Endothelial cell of umbilical vein (primary cell): ENCODE measurements at regions of chr1 and their contacts with region 1.

Region 1: DNA sequence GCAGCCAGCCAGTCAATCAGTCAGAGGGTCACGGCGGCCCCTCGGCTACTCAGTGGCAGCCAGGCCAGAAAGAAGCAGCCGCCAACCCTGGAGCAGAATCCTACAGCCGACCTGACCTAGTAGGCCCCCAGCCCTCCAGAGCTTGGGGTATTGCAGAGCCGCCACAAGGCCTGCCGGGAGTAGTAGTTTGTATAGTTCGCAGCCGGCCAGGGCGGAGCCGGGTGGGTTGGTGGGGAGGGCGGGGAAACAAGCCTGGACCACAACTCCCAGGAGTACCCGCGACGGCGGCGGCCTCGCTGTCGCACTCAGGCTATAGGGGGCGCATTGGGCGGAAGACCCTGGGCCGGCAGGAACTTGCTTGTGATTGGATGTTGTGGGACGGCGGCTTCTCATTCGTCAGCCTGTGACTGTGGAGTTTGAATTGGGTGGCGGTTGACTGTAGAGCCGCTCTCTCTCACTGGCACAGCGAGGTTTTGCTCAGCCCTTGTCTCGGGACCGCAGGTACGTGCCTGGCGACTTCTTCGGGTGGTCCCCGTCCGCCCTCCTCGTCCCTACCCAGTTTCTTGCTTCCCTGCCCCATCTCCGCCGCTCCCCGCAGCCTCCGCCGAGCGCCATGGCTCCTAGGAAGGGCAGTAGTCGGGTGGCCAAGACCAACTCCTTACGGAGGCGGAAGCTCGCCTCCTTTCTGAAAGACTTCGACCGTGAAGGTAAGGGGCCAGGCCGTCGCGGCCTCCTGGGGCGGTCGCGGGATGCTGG is at the start of gene CDCA8:
- DNase-seq: peak; percentile 99
- H3K4me3 ChIP-seq: peak within 1 kb of the TSS; percentile 88 to 96 (median 88)
- H3K27ac ChIP-seq: peak within 1 kb of the TSS; percentile 28
- H3K4me1 ChIP-seq: peaks cover 29% of the 10 kb centered on the region
- H3K27me3 ChIP-seq: no peaks in the 10 kb centered on the region
- CTCF ChIP-seq: peak; percentile 73 to 94
- POLR2A ChIP-seq: peak; percentile 58
- total RNA-seq, gene CDCA8: 43.7 and 45.7 TPM in 2 replicates

Region 2: GRCh38 chr1:37479255-37480124 is 212.8 kb before region 1 on chr1:
- CTCF ChIA-PET with region 1: no interaction called
- POLR2A ChIA-PET with region 1: no interaction called
- dilution Hi-C with region 1: no loop called
- intact Hi-C with region 1: loop called (anchors 2 kb)
- DNase-seq: peak; percentile 76
- H3K4me3 ChIP-seq: peak overlapping the region in 2 of 3 experiments; percentile 3 to 54
- H3K27ac ChIP-seq: peak overlapping the region; percentile 82
- H3K4me1 ChIP-seq: peaks cover 54% of the 10 kb centered on the region
- H3K27me3 ChIP-seq: no peaks in the 10 kb centered on the region
- CTCF ChIP-seq: no peak
- POLR2A ChIP-seq: no peak

Region 3: DNA sequence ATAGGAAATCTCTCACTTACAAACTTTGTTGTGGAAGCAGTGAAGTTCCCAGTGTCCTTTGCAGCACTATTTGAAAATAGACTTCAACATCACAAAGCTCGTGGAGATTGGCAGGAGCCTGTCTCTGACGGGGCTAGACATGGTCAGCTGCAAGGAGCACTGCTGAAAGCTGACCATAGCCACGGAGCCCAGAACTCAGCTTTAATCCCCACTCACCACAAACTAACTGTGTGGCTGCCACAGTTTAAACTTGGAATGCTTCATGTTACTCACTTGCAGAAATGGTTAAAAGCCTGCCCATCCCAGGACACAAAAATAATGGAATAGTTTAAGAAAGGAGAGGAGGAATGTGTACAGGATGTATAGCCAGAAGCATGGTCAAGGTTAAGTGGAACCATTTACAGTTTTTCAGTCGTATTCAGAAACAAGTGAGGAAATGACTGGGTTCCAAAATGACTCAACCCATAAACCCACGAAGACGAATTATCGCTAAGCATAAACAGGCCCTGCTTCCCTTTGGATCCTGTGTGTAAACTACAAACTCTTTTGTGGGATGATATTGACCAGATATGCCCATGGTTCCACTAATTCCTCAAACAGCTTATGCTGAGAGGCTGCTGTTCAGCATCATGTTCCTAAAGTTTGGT is 117.3 kb before region 1 on chr1:
- CTCF ChIA-PET with region 1: interaction called, 4 read pairs
- POLR2A ChIA-PET with region 1: no interaction called
- dilution Hi-C with region 1: no loop called
- intact Hi-C with region 1: loop called (anchors 1 kb)
- DNase-seq: peak; percentile 81
- H3K4me3 ChIP-seq: no peak overlapping the region
- H3K27ac ChIP-seq: peak overlapping the region; percentile 72
- H3K4me1 ChIP-seq: peaks cover 36% of the 10 kb centered on the region
- H3K27me3 ChIP-seq: no peaks in the 10 kb centered on the region
- CTCF ChIP-seq: no peak
- POLR2A ChIP-seq: no peak

Region 4: DNA sequence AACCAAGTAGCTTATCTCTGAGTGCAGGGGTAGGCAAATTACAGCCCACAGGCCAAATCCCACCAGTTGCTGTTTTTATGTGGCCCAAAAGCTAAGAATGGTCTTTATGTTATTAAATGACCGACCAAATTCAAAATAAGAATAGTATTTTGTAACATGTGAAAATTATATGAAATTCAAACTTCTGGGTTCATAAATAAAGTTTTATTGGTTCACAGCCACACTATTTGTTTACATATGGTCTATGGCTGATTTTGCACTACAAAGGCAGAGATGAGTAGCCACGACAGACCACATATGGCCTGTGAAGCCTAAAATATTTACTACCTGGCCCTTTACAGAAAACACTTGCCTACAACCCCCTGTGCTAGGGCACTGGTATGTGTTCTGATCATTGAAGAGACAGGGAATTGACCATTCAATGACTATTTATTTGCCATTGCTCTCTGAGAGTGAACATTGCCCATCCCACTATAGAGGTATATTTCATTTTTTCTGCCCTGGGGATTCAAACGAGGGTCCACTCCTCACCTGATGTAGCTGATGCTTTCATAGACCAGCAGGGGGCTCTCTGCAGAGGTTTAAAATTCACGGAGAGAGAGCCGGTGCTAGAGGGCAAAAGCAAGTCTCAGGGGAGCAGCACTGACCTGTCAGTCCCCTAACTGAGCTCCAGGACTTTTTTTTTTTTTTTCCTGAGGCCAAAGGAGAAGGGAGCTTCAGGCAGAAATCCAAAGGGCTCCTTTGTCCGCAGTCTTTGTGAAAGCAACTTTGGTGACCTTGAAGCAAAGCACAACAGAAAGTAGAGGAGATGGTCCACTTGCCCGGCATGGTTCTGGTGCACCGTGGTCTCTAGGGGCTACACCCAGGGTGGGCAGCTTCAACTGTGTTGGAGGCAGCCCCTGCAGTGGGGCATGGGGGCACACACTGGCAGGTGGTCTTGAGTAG is 89.2 kb before region 1 on chr1:
- CTCF ChIA-PET with region 1: interaction called, 13 read pairs
- POLR2A ChIA-PET with region 1: no interaction called
- dilution Hi-C with region 1: no loop called
- intact Hi-C with region 1: no loop called
- DNase-seq: peak; percentile 20
- H3K4me3 ChIP-seq: no peak overlapping the region
- H3K27ac ChIP-seq: no peak overlapping the region
- H3K4me1 ChIP-seq: no peaks in the 10 kb centered on the region
- H3K27me3 ChIP-seq: peaks cover 8 to 24% of the 10 kb centered on the region in 2 experiments
- CTCF ChIP-seq: peak; percentile 67
- POLR2A ChIP-seq: no peak

Region 5: DNA sequence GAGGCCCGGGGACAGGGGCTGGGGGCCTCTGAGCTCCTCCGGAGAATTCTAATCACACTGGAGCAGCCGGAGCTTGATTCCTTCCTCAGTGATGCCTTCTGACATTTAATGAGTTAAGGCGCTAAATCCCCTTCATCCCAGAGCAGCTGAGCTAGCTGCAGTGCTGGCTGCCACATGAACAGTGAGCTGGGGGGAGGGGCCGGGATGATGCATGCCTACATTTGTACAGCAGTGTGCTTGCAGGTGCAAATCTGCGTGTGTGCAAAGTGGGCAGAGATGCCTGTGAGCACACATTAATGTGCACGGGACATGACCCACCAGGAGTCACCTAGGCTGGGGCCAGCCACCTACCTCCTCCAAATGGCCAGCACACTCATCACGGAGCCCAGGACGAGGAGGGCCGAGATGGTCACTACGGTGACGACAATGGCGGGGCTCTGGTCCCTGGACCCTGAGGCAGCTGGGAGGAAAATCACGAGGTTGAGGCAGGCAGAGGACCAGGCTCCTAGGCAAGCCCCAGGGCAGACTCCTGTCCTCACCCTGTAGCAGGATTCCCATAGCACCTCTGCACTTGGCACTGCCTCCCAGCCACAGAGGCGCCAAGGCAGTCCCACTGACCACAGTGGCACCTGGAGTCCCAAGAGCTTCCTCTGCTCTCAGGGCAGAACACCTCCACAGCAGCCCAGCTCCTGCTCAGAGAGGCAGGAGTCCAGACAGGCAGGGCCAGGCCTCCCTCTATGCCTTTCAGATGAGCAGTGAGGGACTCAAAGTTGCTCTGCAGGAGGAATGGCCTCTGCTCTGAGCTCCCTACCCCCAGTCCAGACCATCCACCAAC is 34.7 kb after region 1 on chr1:
- CTCF ChIA-PET with region 1: no interaction called
- POLR2A ChIA-PET with region 1: no interaction called
- dilution Hi-C with region 1: no loop called
- intact Hi-C with region 1: no loop called
- DNase-seq: no peak
- H3K4me3 ChIP-seq: no peak overlapping the region
- H3K27ac ChIP-seq: no peak overlapping the region
- H3K4me1 ChIP-seq: no peaks in the 10 kb centered on the region
- H3K27me3 ChIP-seq: peaks cover 0 to 2% of the 10 kb centered on the region in 2 experiments
- CTCF ChIP-seq: no peak
- POLR2A ChIP-seq: no peak

Region 6: GRCh38 chr1:37859507-37860345 is 167.5 kb after region 1 on chr1 and contains the start of gene MTF1:
- CTCF ChIA-PET with region 1: interaction called, 22 read pairs
- POLR2A ChIA-PET with region 1: interaction called, 5 read pairs
- dilution Hi-C with region 1: no loop called
- intact Hi-C with region 1: loop called (anchors 1 kb)
- DNase-seq: peak; percentile 97
- H3K4me3 ChIP-seq: peak within 1 kb of the TSS; percentile 58 to 89 (median 87)
- H3K27ac ChIP-seq: peak within 1 kb of the TSS; percentile 78
- H3K4me1 ChIP-seq: peaks cover 11% of the 10 kb centered on the region
- H3K27me3 ChIP-seq: no peaks in the 10 kb centered on the region
- CTCF ChIP-seq: peak; percentile 93 to 96
- POLR2A ChIP-seq: peak; percentile 76
- total RNA-seq, gene MTF1: 18.5 and 18.9 TPM in 2 replicates

Region 7: DNA sequence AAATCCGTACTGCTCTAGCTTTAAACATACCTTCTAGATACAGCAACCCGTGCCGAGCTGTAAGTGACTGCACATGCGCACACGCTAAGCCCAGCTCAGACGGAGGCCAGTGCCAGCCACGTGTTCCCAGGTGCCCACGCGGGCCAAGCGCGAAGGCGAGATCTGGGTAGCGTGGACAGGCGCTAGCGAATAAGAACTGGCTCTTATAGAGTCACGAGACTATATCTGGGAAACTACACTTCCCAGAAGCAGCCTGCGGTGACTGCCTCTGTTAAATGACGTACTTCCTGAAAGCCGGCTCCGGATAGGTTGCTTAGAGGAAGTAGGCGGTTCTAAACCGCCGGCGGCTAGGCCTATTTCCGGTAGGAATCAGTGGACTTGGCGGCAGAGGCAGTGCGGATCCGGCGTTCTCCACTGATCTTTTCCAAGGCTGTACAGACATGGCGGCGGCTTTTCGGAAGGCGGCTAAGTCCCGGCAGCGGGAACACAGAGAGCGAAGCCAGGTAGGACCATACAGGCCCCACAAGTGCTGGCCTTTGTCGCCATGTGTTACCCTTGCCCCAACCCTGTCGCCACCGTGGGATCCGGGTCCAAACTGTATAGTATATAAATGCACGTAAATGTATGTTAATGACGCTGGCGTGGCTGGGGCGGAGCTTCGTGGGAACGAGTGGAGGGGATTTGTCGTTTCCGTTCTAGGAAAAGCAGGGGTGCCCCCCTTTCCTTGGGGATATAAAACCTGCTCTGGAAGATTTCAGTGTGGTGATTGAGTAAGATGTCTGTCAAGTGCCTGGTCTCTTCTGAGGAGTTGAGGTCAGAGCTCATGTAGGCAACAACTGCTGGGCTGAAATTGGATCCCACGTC is 320.3 kb after region 1 on chr1 and contains the start of gene UTP11:
- CTCF ChIA-PET with region 1: no interaction called
- POLR2A ChIA-PET with region 1: no interaction called
- dilution Hi-C with region 1: no loop called
- intact Hi-C with region 1: loop called (anchors 1 kb)
- DNase-seq: peak; percentile 99
- H3K4me3 ChIP-seq: peak within 1 kb of the TSS; percentile 27 to 81 (median 58)
- H3K27ac ChIP-seq: peak within 1 kb of the TSS; percentile 85
- H3K4me1 ChIP-seq: peaks cover 49% of the 10 kb centered on the region
- H3K27me3 ChIP-seq: no peaks in the 10 kb centered on the region
- CTCF ChIP-seq: no peak
- POLR2A ChIP-seq: peak; percentile 90
- total RNA-seq, gene UTP11: 54.1 and 60.1 TPM in 2 replicates